ENCODE measurements at regions of chr12 and their contacts with region 1.

Region 1: GRCh38 chr12:121613462-121613861 is 12.9 kb upstream of the ORAI1 start:
- DNase-seq: peak; percentile 41
- ATAC-seq: peak; percentile 39
- H3K4me3 ChIP-seq: no peak overlapping the region
- H3K27ac ChIP-seq: no peak overlapping the region
- H3K4me1 ChIP-seq: no peaks in the 10 kb centered on the region; the same call in 1 of the 2 replicates
- H3K27me3 ChIP-seq: no peaks in the 10 kb centered on the region
- CTCF ChIP-seq: no peak

Region 2: GRCh38 chr12:121579981-121580868 is 33.2 kb before region 1 on chr12:
- CTCF ChIA-PET with region 1: interaction called, 12 read pairs
- POLR2A ChIA-PET with region 1: no interaction called
- intact Hi-C with region 1: no loop called
- DNase-seq: peak; percentile 63
- ATAC-seq: peak; percentile 63
- H3K4me3 ChIP-seq: peak overlapping the region; percentile 82
- H3K27ac ChIP-seq: peak overlapping the region; percentile 38
- H3K4me1 ChIP-seq: peaks cover 50% of the 10 kb centered on the region
- H3K27me3 ChIP-seq: no peaks in the 10 kb centered on the region
- CTCF ChIP-seq: no peak

Region 3: DNA sequence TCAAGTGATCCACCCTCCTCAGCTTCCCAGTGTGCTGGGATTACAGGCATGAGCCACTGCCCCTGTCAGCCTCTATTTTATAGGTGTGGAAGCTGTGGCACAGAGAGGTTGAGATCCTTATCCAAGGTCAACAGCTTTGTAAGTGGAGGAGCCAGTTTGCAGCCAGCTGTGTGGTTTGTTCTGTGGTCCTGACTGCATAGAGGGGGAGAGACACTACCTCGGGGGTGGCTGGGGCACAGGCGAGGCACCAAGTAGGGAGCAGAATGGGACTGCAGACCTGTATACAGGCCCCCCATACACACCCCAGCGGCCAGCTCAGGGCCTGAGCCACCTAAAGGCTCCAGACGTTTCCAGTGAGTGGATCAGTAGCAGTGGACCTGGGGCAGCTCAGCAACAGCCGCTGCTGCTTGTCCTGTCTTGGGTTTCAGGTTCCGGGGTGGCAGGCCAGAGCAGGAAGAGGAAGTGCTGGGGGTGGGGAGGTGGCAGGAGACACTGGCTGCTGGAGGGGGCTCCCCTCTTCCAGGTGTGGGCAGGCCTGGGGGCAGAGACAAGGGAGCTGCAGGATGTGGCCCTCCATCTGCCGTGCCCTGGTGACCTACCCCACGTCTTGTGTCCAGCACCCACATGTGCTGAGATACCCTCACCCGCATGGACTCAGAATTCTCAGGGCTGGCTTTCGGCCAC is 23.9 kb after region 1 on chr12:
- CTCF ChIA-PET with region 1: no interaction called
- POLR2A ChIA-PET with region 1: no interaction called
- intact Hi-C with region 1: no loop called
- DNase-seq: no peak
- ATAC-seq: no peak; the same call in 1 of the 2 replicates
- H3K4me3 ChIP-seq: no peak overlapping the region
- H3K27ac ChIP-seq: no peak overlapping the region
- H3K4me1 ChIP-seq: no peaks in the 10 kb centered on the region
- H3K27me3 ChIP-seq: no peaks in the 10 kb centered on the region
- CTCF ChIP-seq: no peak

Region 4: GRCh38 chr12:121793838-121794533 is 180.5 kb after region 1 on chr12:
- CTCF ChIA-PET with region 1: no interaction called
- POLR2A ChIA-PET with region 1: no interaction called
- intact Hi-C with region 1: no loop called
- DNase-seq: peak; percentile 98
- ATAC-seq: peak; percentile 19
- H3K4me3 ChIP-seq: peak overlapping the region; percentile 84
- H3K27ac ChIP-seq: peak overlapping the region; percentile 96
- H3K4me1 ChIP-seq: peaks cover 80% of the 10 kb centered on the region
- H3K27me3 ChIP-seq: no peaks in the 10 kb centered on the region
- CTCF ChIP-seq: peak; percentile 99